ENCODE measurements at regions of chr22 and their contacts with region 1.

Region 1: GRCh38 chr22:36977947-36978660 is 41.1 kb downstream of the TST start:
- DNase-seq: peak; percentile 80
- ATAC-seq: peak; percentile 85
- H3K4me3 Mint-ChIP-seq: peak overlapping the region; percentile 90
- H3K27ac Mint-ChIP-seq: peak overlapping the region; percentile 93
- H3K4me1 Mint-ChIP-seq: peaks cover 12% of the 10 kb centered on the region
- H3K27me3 Mint-ChIP-seq: peaks cover 11% of the 10 kb centered on the region
- CTCF ChIP-seq: peak; percentile 92

Region 2: DNA sequence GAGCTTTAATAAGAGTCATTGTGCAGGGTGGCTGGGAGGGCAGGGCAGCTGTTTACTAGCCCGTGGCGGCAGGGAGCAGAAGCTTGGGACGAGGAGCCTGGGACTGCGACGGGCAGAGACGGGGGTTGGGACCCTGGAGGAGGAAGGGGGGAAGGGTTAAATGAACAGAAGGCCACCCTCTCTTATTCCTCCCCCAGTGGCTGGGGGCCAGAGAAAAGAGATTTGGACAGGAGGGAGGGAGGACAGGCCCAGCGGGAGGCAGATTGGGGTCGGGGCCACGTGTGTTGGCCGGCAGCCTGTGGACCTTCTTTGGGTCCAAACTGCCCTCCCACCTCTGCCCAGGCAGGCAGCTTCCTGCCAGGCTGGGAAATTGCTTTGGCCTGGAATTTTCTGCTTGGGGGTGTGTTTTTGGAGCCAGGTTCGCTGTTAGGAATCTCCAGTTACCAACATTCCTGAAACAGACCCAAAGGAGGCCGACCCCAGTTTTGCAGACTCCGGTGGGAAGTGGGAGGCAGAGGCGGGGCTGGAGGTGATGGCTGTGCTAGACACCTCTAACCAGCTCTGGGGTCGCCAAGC is 867.7 kb before region 1 on chr22:
- CTCF ChIA-PET with region 1: no interaction called
- POLR2A ChIA-PET with region 1: no interaction called
- intact Hi-C with region 1: no loop called
- DNase-seq: no peak
- ATAC-seq: no peak
- H3K4me3 Mint-ChIP-seq: no peak overlapping the region
- H3K27ac Mint-ChIP-seq: no peak overlapping the region
- H3K4me1 Mint-ChIP-seq: no peaks in the 10 kb centered on the region
- H3K27me3 Mint-ChIP-seq: peaks cover 9% of the 10 kb centered on the region
- CTCF ChIP-seq: no peak

Region 3: DNA sequence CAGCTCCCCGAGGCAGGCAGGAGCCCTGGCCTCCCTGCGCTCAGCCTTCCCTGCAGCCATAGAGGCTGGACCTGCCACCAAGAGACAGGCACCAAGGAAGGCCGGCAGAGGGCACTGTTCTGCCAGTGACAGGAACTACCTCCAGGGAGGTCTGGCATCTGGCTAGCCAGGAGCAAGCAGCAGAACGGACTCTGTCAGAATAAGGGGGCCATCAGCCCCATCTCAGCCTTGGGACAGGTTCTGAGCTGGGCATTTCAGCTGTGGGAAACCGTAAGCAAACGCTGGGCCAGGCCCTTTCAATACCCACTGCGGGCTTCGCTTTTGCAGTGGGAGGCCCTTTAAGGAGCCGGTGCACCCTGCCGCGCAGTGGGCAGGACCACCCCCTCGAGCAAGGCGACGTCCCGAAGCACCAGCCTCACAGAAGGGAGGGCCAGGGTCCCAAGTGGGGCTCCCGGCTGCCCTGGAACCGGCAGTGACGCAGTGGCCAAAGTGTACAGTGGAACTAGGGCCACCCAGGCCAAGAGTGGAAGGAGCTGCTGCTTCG is 220.4 kb before region 1 on chr22:
- CTCF ChIA-PET with region 1: interaction called, 22 read pairs
- POLR2A ChIA-PET with region 1: no interaction called
- intact Hi-C with region 1: loop called (anchors 1 kb)
- DNase-seq: peak; percentile 66
- ATAC-seq: peak; percentile 81
- H3K4me3 Mint-ChIP-seq: no peak overlapping the region
- H3K27ac Mint-ChIP-seq: no peak overlapping the region
- H3K4me1 Mint-ChIP-seq: no peaks in the 10 kb centered on the region
- H3K27me3 Mint-ChIP-seq: peaks cover 16% of the 10 kb centered on the region
- CTCF ChIP-seq: peak; percentile 41

Region 4: DNA sequence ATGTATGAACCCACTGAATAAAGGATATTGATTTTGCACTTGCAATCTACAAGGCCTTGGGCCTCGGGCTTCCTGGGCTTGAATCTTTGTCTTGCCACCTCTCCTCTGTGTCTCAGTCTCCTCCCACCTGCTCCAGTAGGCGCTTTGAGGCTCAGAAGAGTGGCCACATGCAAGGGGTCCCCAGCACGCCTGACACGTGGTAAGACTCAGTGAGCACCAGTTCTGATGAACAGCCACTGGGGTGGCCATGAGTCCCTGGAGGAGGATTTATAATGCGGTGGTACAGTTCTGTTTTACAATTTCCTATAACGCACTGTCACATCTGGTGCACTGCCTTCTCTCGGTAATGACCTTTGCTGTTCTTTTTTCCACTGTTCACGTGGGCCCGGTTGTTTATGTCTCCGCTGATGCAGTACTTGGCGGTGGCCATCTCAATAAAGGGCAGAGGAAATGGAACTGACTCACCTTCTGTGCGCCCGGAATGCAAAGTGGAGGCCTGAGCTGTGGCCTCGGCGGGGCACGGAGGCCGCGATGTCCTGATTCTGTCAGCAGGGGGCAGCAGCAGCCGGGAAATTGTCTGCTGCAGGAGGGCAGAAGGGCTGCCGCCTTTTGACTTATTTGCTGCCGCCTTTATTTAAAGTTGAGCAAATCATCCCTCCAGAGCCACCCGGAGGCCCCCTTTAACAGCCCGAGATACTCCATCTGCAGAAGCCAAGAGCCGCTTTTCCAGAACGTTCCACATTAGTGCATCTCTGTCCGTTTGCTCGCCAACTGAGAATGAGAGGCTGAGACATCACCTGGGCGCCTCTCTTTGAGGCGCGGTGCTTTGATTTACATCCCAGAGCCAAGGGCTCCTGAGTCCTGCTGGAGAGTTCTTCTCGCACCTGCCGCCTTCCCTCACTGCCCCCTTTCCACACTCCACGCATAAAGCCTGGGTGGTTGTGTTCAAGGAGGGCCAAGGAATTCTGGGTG is 196.2 kb before region 1 on chr22:
- CTCF ChIA-PET with region 1: interaction called, 60 read pairs
- POLR2A ChIA-PET with region 1: interaction called, 12 read pairs
- intact Hi-C with region 1: loop called (anchors 1 kb)
- DNase-seq: peak; percentile 87
- ATAC-seq: peak; percentile 98
- H3K4me3 Mint-ChIP-seq: peak overlapping the region; percentile 41
- H3K27ac Mint-ChIP-seq: peak overlapping the region; percentile 77
- H3K4me1 Mint-ChIP-seq: peaks cover 14% of the 10 kb centered on the region
- H3K27me3 Mint-ChIP-seq: peaks cover 3% of the 10 kb centered on the region
- CTCF ChIP-seq: peak; percentile 97

Region 5: GRCh38 chr22:36940676-36941075 is 37.4 kb before region 1 on chr22:
- CTCF ChIA-PET with region 1: interaction called, 6 read pairs
- POLR2A ChIA-PET with region 1: interaction called, 3 read pairs
- intact Hi-C with region 1: loop called (anchors 2 kb)
- DNase-seq: peak; percentile 38
- ATAC-seq: peak; percentile 87
- H3K4me3 Mint-ChIP-seq: peak overlapping the region; percentile 65
- H3K27ac Mint-ChIP-seq: peak overlapping the region; percentile 89
- H3K4me1 Mint-ChIP-seq: peaks cover 59% of the 10 kb centered on the region
- H3K27me3 Mint-ChIP-seq: no peaks in the 10 kb centered on the region
- CTCF ChIP-seq: no peak